OCI-LY7 (cell line): ENCODE measurements at regions of chr2 and their contacts with region 1.

Region 1: GRCh38 chr2:54773838-54774237 is 50.4 kb downstream of the EML6 start:
- DNase-seq: no peak
- H3K4me3 ChIP-seq: no peak overlapping the region
- H3K27ac ChIP-seq: no peak overlapping the region
- H3K4me1 ChIP-seq: peaks cover 7% of the 10 kb centered on the region
- CTCF ChIP-seq: 0 out of 2 replicates have a peak, but pooled peaks have one; percentile 24

Region 2: DNA sequence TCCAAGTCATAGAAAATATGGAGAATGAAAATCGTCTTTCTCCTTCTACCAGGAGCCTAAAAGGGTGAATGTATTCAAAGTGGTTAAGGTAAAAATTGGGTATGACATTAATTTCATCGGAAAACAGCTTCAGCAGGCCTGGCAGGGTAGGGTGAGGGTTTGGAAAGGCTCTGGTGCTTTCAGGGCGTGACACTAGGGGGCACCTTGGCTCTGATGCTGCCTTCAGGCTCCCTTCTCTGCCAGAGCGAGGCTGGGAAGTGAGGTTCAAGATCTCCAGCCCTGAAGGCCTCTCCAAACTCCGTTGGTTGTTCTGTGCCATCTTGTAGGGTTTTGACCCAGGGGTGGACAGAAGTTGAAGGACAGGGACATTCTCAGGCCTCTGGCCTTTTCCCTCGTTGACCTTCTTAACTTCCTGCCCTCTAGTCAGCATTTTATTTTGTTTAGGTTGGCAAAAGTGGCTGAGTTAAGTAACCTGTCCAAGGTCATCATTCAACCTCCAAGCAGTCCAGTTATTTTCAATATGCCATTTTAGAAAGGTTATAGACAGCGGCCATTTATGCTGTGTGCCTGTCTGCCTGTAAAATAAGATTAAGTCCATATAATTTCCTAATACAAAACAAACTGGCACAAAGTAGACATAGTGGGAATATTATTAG is 10.1 kb before region 1 on chr2:
- CTCF ChIA-PET with region 1: interaction called, 4 read pairs
- POLR2A ChIA-PET with region 1: interaction called, 15 read pairs
- intact Hi-C with region 1: no loop called
- DNase-seq: peak; percentile 40
- H3K4me3 ChIP-seq: no peak overlapping the region
- H3K27ac ChIP-seq: no peak overlapping the region
- H3K4me1 ChIP-seq: peaks cover 91% of the 10 kb centered on the region
- CTCF ChIP-seq: peak; percentile 84